ENCODE measurements at regions of chr1 and their contacts with region 1.

Region 1: DNA sequence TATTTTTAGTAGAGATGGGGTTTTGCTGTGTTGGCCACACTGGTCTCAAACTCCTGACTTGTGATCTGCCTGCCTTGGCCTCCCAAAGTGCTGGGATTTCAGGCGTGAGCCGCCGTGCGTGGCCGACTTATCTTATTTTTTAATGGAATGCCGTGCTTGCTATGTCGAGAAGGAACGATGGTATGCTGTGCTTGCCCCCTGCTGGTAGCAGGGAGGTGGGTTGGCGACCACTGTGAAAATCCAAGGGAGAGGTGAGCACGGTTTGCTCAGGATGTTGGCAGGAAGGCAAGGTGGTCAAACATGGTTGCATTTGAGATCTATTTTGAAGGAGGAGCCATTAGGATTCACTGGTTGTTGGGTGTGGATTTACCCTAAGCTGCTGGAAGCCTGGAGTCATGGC is 45.8 kb upstream of the RCC2 start:
- DNase-seq: peak; percentile 56
- H3K4me3 Mint-ChIP-seq: no peak overlapping the region
- H3K27ac Mint-ChIP-seq: no peak overlapping the region
- H3K4me1 Mint-ChIP-seq: no peaks in the 10 kb centered on the region
- H3K27me3 Mint-ChIP-seq: peaks cover 13% of the 10 kb centered on the region
- CTCF ChIP-seq: peak; percentile 42

Region 2: DNA sequence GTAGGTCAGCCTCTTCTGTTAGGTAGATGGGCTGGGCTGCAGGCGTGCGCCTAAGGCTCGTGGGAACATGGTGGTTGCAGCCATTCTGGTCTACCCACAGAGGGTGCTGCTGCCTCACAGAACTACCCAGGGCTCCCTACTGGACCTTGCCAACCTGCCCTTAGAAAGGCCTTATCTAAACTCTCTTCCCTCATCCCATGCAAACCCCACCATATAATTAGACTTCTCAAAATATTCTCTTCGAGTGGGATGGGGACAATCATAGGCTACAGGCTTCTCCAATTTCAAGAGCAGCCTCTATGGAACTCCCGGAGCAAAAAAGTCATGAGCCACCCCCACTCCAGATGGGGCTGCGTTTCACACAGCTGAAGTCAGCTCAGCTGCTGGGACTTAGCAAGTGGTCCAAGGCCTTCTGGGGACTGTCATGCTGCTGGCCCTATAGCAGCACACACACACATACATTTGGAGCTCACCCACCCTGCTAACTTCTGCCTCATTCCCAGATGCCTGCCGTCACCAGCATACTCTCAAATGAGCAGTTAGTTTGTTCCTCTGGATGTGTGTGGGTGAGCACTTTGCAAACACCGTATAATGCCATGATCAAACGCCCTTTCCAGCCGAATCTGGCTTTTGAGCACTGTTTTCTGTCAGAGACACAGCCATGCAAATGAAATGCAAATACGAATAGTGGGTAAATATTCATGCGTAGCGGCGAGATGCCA is 425.4 kb before region 1 on chr1:
- CTCF ChIA-PET with region 1: no interaction called
- intact Hi-C with region 1: loop called (anchors 5 kb)
- DNase-seq: peak; percentile 74
- H3K4me3 Mint-ChIP-seq: no peak overlapping the region
- H3K27ac Mint-ChIP-seq: no peak overlapping the region
- H3K4me1 Mint-ChIP-seq: no peaks in the 10 kb centered on the region
- H3K27me3 Mint-ChIP-seq: peaks cover 15% of the 10 kb centered on the region
- CTCF ChIP-seq: peak; percentile 55

Region 3: GRCh38 chr1:17314491-17315022 is 170.7 kb before region 1 on chr1:
- CTCF ChIA-PET with region 1: no interaction called
- intact Hi-C with region 1: no loop called
- DNase-seq: no peak
- H3K4me3 Mint-ChIP-seq: no peak overlapping the region
- H3K27ac Mint-ChIP-seq: no peak overlapping the region
- H3K4me1 Mint-ChIP-seq: no peaks in the 10 kb centered on the region
- H3K27me3 Mint-ChIP-seq: peaks cover 13% of the 10 kb centered on the region
- CTCF ChIP-seq: no peak

Region 4: DNA sequence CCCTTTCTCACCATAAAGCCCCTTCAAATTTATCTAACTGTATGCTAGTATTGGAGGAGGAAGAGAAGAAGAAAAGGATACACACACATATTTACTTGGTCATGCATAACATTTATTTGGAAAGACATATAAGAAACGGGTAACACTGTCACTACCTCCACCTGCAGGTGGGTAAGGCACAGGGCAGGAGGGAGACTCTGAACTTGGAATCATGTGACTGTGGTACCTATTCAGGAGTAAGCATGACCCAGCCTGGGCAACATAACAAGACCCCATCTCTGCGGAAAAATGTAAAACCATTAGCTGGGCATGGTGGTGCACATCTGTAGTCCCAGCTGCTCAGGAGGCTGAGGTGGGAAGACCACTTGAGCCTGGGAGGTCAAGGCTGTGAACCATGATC is 114.7 kb before region 1 on chr1:
- CTCF ChIA-PET with region 1: no interaction called
- intact Hi-C with region 1: no loop called
- DNase-seq: peak; percentile 21
- H3K4me3 Mint-ChIP-seq: no peak overlapping the region
- H3K27ac Mint-ChIP-seq: no peak overlapping the region
- H3K4me1 Mint-ChIP-seq: no peaks in the 10 kb centered on the region
- H3K27me3 Mint-ChIP-seq: peaks cover 18% of the 10 kb centered on the region
- CTCF ChIP-seq: peak; percentile 36

Region 5: DNA sequence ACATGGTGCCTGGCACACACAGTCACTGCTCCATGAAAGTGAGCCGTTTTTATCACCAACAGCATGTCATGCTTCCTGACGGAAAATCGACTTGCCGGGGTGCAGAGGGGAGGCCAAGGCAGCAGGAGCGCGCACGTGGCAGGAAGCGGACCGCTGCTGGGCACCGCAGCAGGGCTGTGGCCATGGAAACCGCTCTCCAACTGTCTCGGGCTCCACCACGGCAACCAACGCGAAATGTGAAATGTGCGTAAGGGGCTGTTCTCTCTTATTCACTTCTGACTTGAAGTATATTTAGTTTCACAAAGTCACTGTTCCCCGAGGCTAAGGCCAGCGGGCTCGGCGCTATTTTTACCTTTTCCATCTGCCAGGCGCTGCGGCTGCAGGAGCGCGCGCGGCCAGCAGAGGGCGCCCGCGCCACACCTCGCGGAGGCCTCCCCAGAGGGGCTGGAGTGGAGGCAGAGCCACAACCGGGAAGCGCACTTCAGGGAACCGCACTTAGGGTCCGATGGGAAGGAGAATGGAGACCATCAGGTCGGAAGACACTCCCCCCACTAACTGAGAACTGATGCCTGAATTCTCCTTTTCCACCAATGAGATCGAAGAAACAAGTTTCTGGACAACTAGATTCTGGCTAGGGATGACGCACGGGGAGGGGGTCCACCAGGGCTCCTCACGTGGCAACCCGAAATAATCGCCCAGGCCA is 65.5 kb before region 1 on chr1:
- CTCF ChIA-PET with region 1: no interaction called
- intact Hi-C with region 1: loop called (anchors 5 kb)
- DNase-seq: peak; percentile 53
- H3K4me3 Mint-ChIP-seq: no peak overlapping the region
- H3K27ac Mint-ChIP-seq: no peak overlapping the region
- H3K4me1 Mint-ChIP-seq: peaks cover 8% of the 10 kb centered on the region
- H3K27me3 Mint-ChIP-seq: no peaks in the 10 kb centered on the region
- CTCF ChIP-seq: peak; percentile 83

Region 6: GRCh38 chr1:17460245-17460644 is 25.0 kb before region 1 on chr1:
- CTCF ChIA-PET with region 1: no interaction called
- intact Hi-C with region 1: no loop called
- DNase-seq: peak; percentile 10
- H3K4me3 Mint-ChIP-seq: no peak overlapping the region
- H3K27ac Mint-ChIP-seq: no peak overlapping the region
- H3K4me1 Mint-ChIP-seq: no peaks in the 10 kb centered on the region
- H3K27me3 Mint-ChIP-seq: no peaks in the 10 kb centered on the region
- CTCF ChIP-seq: no peak

Region 7: GRCh38 chr1:17673329-17674072 is 188.2 kb after region 1 on chr1:
- CTCF ChIA-PET with region 1: no interaction called
- intact Hi-C with region 1: no loop called
- DNase-seq: no peak
- H3K4me3 Mint-ChIP-seq: no peak overlapping the region
- H3K27ac Mint-ChIP-seq: no peak overlapping the region
- H3K4me1 Mint-ChIP-seq: no peaks in the 10 kb centered on the region
- H3K27me3 Mint-ChIP-seq: no peaks in the 10 kb centered on the region
- CTCF ChIP-seq: no peak

Measured in Calu3 (cell line).